ENCODE measurements at regions of chr2 and their contacts with region 1.

Region 1: GRCh38 chr2:7044261-7045250 is 127.3 kb downstream of the RNF144A start:
- DNase-seq: peak; percentile 63 to 87
- ATAC-seq: peak; percentile 88
- H3K4me3 ChIP-seq: no peak overlapping the region
- H3K27ac ChIP-seq: no peak overlapping the region
- H3K4me1 ChIP-seq: no peaks in the 10 kb centered on the region
- H3K27me3 ChIP-seq: no peaks in the 10 kb centered on the region

Region 2: DNA sequence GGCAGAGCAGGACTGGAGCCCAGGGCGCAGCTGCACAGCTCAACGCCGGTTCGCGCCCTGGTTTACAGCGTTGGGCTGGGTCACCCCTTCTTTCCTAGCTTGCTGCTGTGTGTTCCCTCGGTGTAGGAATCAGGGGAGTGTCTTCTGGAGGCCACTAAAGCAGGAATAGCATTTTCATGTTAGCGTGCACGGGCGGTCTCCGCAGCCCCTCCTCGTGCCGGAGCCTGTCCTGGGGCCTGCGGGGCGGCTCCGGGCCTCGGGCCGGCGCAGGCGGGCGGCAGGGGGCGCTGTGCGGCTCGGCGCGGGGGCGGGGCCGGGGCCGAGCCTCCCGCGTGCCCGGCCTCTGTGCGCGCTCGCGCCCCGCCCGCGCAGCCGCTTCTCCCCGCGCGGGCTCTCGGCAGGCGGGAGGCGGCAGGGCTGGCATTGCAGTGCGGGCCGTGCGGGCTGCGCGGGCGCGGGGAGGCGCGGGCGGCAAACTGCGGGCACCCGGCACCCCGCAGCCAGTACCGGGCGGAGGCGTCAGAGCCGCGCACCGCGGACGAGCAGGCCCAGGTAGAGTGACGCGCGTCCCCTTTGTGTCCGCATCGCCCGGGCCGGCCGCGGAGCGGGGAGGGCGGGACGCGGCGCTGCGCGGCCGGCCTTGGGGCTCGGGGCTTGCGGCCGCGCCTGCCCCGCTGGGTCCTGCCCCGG is 127.3 kb before region 1 on chr2 and contains the start of gene RNF144A:
- intact Hi-C with region 1: loop called in 1 of 2 experiments (anchors 10 kb)
- DNase-seq: peak in 1 of 2 donors; percentile 87
- ATAC-seq: peak; percentile 89
- H3K4me3 ChIP-seq: peak within 1 kb of the TSS; percentile 50 to 66
- H3K27ac ChIP-seq: no peak within 1 kb of the TSS
- H3K4me1 ChIP-seq: no peaks in the 10 kb centered on the region
- H3K27me3 ChIP-seq: no peaks in the 10 kb centered on the region
- total RNA-seq, gene RNF144A: 6.7 to 27.6 TPM

Region 3: DNA sequence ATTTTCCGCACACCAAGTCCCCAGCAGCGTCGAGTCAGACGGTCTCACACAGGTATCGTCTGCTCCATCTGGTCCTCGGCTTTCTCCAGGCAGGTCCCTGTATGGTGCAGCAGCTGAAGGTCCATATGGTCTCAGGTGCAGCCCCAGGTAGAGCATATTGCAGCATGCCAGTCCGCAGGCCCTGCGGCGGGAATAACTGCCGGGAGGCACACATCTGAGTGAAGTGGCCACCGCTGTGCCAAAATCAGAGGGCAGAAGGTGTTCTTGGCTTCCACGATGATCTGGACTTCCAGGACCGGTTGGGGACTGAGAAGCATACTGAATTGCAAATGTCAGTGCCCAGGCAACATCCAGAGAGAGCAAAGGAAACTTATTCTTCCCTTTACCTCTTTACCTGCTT is 192.9 kb after region 1 on chr2:
- intact Hi-C with region 1: no loop called
- DNase-seq: no peak
- ATAC-seq: no peak
- H3K4me3 ChIP-seq: no peak overlapping the region
- H3K27ac ChIP-seq: no peak overlapping the region
- H3K4me1 ChIP-seq: no peaks in the 10 kb centered on the region
- H3K27me3 ChIP-seq: peaks cover 0 to 1% of the 10 kb centered on the region in 2 donors

Measured in aorta (tissue), 5 donors.